ENCODE measurements at regions of chr9 and their contacts with region 1.

Region 1: GRCh38 chr9:136312436-136312835 is 8.5 kb upstream of the CCDC187 start:
- DNase-seq: no peak
- H3K4me3 ChIP-seq: no peak overlapping the region
- H3K27ac ChIP-seq: no peak overlapping the region
- H3K27me3 ChIP-seq: no peaks in the 10 kb centered on the region
- CTCF ChIP-seq: peak; percentile 85

Region 2: DNA sequence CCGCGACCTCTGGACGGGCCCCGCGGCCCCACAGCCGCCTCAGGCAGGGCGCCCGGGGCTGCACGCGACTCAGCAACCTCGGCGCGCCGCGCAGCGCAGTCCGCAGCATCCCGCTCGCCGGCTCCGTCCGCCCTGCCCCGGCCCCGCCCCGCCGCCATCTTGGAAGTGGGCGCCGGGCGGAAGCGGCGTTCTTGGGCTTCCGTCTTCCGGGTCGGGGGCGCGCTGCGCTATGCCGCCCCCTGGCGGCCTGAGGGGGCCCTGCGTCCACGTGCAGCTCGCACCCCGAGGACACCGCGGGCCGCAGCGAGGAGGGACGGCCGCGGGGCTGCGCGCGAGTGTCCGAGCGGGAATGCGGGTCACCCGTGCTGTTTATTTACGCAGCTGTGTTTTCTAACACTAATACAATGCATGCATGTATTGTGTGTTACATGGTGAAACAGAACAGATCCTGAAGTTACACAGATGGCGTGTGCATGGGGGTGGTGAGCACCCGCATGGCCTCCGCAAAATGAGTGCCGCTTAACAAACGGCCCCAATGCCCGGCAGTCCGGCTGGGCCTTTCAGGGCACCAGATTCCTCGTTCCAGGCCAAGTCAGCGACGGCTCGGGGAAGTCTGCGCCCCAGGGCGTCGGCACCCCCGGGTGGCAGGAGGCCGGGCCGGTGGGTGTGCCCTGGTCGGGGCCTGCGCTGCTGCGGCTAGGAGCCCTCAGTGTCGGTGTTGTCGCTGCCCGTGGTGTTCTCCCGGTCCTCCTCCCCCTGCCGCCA is 51.4 kb after region 1 on chr9 and contains the start of gene DNLZ:
- CTCF ChIA-PET with region 1: interaction called, 25 read pairs
- POLR2A ChIA-PET with region 1: interaction called, 3 read pairs
- DNase-seq: peak; percentile 60
- H3K4me3 ChIP-seq: peak within 1 kb of the TSS; percentile 72
- H3K27ac ChIP-seq: peak within 1 kb of the TSS; percentile 65
- H3K27me3 ChIP-seq: no peaks in the 10 kb centered on the region
- CTCF ChIP-seq: peak; percentile 81
- polyA plus RNA-seq, gene DNLZ: 3.7 and 4.7 TPM in 2 replicates

Region 3: DNA sequence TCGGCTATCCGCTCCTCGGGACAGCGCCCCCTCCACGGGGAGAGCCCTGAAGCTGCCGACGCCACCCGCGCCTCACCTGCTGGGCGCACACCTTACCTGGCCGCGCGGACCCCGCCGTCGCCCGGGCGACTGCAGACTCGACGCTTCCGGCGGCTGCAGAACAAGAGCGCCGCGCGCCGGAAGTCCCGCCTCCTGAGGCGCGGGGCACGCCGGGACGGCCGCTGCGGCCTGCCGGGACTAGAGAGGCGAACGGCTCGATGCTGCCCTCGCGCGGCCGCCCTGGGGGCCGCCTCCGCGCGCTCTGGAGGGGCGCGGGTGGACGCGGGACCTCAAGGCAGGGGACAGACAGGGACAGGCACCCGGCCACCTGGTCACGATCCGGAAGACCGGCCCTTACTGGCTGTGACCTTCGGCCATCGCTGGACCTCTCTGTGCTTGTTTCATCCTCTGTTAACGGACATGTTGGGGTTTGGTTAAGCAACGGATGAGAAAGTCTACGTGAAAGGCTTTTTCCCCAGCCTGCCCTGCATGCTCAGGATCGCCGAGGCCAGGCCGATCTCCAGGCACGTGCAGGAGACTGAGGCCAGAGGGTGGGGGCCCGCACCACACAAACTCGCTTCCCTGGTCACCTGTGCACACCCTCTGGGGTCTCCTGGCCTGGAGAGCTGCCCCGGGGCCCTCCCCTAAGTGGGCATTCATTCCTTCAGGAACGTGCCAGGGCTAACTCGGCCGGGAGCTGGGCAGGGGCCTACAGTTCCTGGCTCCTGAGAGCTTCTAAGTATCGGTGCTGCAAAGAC is 87.8 kb after region 1 on chr9 and contains the start of gene SNAPC4:
- CTCF ChIA-PET with region 1: interaction called, 36 read pairs
- POLR2A ChIA-PET with region 1: no interaction called
- DNase-seq: peak; percentile 34
- H3K4me3 ChIP-seq: peak within 1 kb of the TSS; percentile 86
- H3K27ac ChIP-seq: peak within 1 kb of the TSS; percentile 57
- H3K27me3 ChIP-seq: no peaks in the 10 kb centered on the region
- CTCF ChIP-seq: peak; percentile 68
- polyA plus RNA-seq, gene SNAPC4: 2.2 and 2.4 TPM in 2 replicates

Region 4: GRCh38 chr9:136648751-136649150 is 336.3 kb after region 1 on chr9:
- CTCF ChIA-PET with region 1: no interaction called
- POLR2A ChIA-PET with region 1: no interaction called
- DNase-seq: no peak
- H3K4me3 ChIP-seq: no peak overlapping the region
- H3K27ac ChIP-seq: no peak overlapping the region
- H3K27me3 ChIP-seq: peaks cover 18% of the 10 kb centered on the region
- CTCF ChIP-seq: no peak